ENCODE measurements at regions of chr16 and their contacts with region 1.

Region 1: DNA sequence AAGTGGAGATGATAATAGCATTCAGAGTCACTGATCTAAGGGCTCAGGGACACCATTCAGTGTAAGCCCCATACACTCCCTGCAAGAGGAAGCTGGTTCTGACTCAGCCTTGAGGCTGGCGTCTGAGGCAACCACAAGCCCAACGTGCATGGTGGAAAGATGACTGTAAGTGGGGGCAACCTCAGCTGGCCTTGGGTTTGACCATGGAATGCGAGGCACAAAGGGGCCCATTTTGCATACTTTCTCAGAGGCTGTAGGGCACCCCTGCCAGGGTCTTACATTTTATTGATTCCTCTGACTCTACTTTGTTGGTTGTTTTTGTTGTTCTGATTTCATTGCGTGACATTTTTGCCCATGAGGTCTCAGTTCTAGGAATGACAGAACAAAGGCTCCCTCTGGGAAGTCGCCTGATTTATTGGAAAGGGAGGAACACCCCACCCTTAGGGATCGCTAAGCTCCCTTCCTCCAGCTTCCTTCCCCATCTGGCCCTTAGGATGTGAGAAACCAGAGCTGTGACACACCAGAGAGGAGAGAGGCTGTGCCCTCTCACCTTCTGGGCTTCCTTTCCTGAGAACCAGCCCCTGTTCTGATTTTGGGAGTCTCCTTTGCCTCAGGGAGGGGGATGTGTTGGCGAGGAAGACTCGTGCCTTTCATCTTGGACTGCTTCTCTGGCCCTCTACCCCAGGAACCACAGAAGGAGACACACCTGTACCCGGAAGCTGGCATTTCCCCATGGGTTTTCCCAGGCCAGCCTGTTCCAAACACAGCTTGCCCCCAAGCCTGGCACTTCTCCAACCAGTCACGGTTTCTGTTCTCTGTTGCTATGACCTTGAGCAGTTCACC is 5.6 kb upstream of the CIITA start:
- DNase-seq: peak; percentile 87
- ATAC-seq: peak; percentile 92
- H3K4me3 Mint-ChIP-seq: peak overlapping the region; percentile 7
- H3K27ac Mint-ChIP-seq: peak overlapping the region; percentile 71
- H3K4me1 Mint-ChIP-seq: peaks cover 51% of the 10 kb centered on the region
- H3K27me3 Mint-ChIP-seq: peaks cover 43% of the 10 kb centered on the region

Region 2: DNA sequence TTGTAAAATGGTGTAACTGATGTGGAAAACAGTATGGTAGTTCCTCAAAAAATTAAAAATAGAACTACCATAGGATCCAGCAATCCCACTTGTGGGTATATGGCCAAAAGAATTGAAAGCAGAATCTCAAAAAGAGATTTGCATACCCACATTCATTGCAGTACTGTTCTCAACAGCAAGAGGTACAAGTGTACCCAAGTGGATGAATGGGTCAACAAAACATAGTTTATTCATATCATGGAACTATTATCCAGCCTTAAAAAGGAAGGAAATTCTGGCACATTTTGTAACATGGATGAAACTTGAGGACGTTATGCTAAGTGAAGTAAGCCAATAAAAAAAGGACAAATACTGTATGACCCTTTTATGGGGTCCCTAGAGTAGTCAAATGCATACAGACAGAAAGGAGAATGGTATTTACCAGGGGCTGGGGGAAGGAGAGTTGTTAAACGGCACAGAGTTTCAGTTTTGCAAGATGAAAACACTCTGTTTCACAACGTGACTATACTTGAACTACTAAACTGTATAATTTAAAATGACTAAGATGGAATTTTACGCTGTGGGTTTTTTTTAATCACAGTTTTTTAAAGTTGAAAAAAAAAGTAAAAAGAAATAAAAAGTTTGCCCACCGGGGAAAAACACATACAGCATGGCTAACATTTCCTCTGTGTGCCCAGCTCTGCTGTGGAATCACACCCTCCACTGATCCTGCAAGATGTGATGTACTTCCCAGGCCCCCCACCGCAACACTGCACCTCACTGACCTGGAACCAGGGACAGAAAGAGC is 58.9 kb before region 1 on chr16:
- CTCF ChIA-PET with region 1: no interaction called
- POLR2A ChIA-PET with region 1: no interaction called
- intact Hi-C with region 1: loop called (anchors 1 kb)
- DNase-seq: peak; percentile 10
- ATAC-seq: peak; percentile 93
- H3K4me3 Mint-ChIP-seq: no peak overlapping the region
- H3K27ac Mint-ChIP-seq: no peak overlapping the region
- H3K4me1 Mint-ChIP-seq: peaks cover 9% of the 10 kb centered on the region
- H3K27me3 Mint-ChIP-seq: no peaks in the 10 kb centered on the region

Region 3: GRCh38 chr16:10846213-10846998 is 25.0 kb before region 1 on chr16:
- CTCF ChIA-PET with region 1: no interaction called
- POLR2A ChIA-PET with region 1: no interaction called
- intact Hi-C with region 1: no loop called
- DNase-seq: no peak
- ATAC-seq: no peak
- H3K4me3 Mint-ChIP-seq: no peak overlapping the region
- H3K27ac Mint-ChIP-seq: no peak overlapping the region
- H3K4me1 Mint-ChIP-seq: no peaks in the 10 kb centered on the region
- H3K27me3 Mint-ChIP-seq: peaks cover 15% of the 10 kb centered on the region

Region 4: DNA sequence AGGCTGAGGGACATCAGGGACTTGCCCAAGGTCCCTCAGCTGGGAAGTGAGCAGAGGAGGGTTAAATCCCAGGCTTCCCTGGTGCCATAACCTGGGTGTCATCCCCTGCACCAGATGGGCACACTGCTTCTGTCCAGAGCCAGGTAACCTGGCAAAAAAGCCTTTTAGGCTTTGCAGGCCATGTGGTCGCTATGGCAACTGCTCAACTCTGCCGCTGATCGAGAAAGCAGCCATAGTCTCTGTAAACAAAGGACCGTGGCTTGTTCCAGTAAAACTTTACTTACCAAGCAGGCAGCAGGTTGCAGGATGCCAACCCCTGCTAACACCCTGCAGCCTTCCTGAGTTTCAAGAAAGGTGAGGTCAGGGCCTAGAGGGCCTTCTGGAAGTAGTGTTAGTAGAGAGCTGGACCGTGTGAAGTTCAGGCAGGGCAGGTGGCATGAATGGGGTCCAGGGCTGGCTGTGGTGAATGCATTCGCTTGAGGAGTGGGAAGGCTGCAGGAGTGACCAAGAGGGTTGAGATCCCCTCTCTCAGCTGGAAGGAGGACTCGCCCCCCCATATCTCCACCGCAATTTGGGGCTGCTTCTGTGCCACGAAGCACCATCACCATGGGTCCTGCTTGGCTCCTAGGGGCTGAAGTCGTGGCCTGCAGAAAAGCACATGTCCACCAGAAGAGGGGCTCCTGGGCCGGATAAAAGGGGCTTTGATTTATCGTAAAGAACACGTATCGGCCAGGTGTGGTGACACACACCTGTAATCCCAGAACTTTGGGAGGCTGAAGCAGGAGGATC is 293.3 kb after region 1 on chr16:
- CTCF ChIA-PET with region 1: no interaction called
- POLR2A ChIA-PET with region 1: no interaction called
- intact Hi-C with region 1: no loop called
- DNase-seq: no peak
- ATAC-seq: no peak
- H3K4me3 Mint-ChIP-seq: no peak overlapping the region
- H3K27ac Mint-ChIP-seq: no peak overlapping the region
- H3K4me1 Mint-ChIP-seq: peaks cover 28% of the 10 kb centered on the region
- H3K27me3 Mint-ChIP-seq: no peaks in the 10 kb centered on the region

Region 5: GRCh38 chr16:11345040-11345862 is 473.9 kb after region 1 on chr16 and contains the start of gene RMI2:
- CTCF ChIA-PET with region 1: no interaction called
- POLR2A ChIA-PET with region 1: no interaction called
- intact Hi-C with region 1: no loop called
- DNase-seq: peak; percentile 99
- ATAC-seq: peak; percentile 96
- H3K4me3 Mint-ChIP-seq: peak within 1 kb of the TSS; percentile 90
- H3K27ac Mint-ChIP-seq: peak within 1 kb of the TSS; percentile 94
- H3K4me1 Mint-ChIP-seq: peaks cover 49% of the 10 kb centered on the region
- H3K27me3 Mint-ChIP-seq: no peaks in the 10 kb centered on the region
- total RNA-seq, gene RMI2: 56.0 to 69.8 TPM

Region 6: DNA sequence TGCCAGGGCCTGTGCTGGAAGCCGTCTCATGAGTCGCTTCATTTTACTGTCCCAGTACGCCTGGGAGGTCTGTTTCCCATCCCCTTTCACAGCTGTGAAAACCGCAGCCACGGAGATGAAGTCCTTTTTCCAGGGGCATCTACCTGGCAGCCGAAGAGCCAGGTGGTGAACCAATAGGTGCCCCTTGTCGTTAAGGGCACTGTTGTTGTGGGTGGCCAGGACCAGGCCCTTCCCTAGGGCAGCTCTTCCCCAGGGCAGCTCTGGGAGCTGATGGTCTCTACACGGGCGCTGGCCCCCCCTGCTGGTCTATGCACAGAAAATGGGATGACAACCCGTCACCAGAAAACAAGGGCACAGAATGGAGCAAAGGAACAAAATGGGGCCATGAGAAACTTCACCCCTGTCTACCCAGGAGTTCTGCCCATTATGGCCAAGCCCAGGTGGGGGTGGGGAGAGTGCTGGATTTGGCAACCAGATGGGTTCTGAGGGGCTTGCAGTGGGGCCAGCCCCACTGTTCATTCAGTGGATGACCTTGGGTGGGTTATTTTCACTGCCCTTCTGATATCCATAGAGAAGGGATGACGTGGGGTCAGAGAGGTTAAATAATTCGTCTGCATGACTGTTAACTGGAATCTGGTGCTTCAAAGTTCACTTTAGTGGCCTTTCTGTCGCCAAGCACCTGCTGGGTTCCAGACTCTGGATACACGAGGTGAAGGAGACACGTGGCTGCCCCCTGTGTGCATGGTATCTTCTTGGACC is 485.4 kb after region 1 on chr16:
- CTCF ChIA-PET with region 1: no interaction called
- POLR2A ChIA-PET with region 1: no interaction called
- intact Hi-C with region 1: no loop called
- DNase-seq: peak; percentile 79
- ATAC-seq: no peak
- H3K4me3 Mint-ChIP-seq: peak overlapping the region; percentile 46
- H3K27ac Mint-ChIP-seq: peak overlapping the region; percentile 23
- H3K4me1 Mint-ChIP-seq: peaks cover 67% of the 10 kb centered on the region
- H3K27me3 Mint-ChIP-seq: peaks cover 7% of the 10 kb centered on the region